ENCODE measurements at regions of chr11 and their contacts with region 1.

Region 1: DNA sequence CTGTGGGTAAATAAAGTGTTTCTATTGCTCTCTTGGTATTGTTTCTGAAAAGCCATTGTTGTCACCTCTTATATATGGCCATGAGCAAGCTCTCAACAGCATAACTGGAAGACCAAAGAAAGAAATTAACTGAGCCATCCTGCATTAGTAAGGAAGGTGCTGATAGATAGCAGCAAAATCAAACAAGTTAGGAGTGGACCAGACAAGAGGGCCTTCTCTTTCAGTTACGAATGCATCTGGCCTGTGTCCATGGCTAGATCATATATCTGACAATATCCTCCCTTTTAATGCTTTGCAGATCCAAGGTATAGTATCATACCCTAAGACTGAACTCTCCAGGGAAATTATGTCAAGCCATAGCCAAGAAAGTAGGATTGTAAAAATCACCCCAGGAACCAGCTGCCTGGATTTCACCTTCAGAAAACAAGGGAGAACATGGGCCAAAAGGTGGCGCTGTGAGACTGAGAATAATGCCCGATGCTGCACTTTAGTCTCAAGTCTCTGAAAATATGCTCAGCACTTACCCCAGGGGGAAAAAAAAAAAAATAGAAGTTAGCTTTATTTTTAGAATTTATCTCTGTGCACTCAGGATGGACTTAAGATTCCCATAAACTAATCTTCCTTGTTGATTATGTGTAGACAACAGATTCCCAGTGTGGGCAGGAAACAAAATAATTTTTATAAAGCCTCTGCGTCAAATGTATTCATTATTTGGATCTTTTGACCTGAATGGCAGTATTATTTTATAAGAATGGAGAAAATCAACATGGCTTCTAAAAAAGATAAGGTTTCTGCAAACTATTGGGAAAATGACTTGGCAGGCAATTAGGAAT is 415.1 kb downstream of the ETS1 start:
- DNase-seq: peak; percentile 91
- H3K4me3 Mint-ChIP-seq: no peak overlapping the region
- H3K27ac Mint-ChIP-seq: peak overlapping the region; percentile 25
- H3K4me1 Mint-ChIP-seq: peaks cover 17% of the 10 kb centered on the region
- H3K27me3 Mint-ChIP-seq: no peaks in the 10 kb centered on the region

Region 2: GRCh38 chr11:128182844-128183243 is 10.6 kb after region 1 on chr11:
- CTCF ChIA-PET with region 1: interaction called, 11 read pairs
- POLR2A ChIA-PET with region 1: no interaction called
- intact Hi-C with region 1: no loop called
- DNase-seq: peak; percentile 32
- H3K4me3 Mint-ChIP-seq: no peak overlapping the region
- H3K27ac Mint-ChIP-seq: no peak overlapping the region
- H3K4me1 Mint-ChIP-seq: peaks cover 9% of the 10 kb centered on the region
- H3K27me3 Mint-ChIP-seq: no peaks in the 10 kb centered on the region

Region 3: DNA sequence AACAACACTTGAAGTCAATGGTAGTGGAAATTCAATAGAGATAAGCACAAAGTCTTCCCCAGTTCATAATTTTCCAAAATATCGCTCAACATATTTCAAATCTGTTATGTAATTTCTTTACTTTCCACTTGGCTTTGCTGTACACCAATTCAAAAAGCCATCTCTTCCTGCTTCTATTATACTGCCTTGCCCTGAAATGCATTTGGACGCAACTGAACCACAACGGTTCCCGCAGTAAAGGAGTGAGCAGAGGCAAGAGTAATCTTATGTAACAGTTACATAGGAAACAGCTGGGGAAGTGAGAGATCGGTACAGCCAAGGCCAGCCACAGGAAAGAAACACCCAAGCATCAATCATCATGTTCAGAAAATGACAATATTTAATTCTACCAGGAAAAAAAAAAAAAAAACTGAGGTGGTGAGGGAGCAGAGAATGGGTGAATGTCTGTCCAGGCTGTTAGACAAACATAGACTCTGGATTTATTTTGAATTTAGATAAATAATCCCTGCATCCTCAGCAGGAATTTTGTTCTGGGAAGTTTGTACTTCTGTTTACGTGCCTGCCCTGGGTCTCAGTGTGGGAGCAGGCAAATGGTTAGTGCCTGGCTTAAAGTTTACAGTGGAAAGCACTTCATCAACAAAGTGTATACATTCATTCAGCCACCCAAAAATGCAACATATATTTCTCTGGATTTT is 22.9 kb after region 1 on chr11:
- CTCF ChIA-PET with region 1: interaction called, 7 read pairs
- POLR2A ChIA-PET with region 1: no interaction called
- intact Hi-C with region 1: loop called (anchors 1 kb)
- DNase-seq: peak; percentile 69
- H3K4me3 Mint-ChIP-seq: no peak overlapping the region
- H3K27ac Mint-ChIP-seq: peak overlapping the region; percentile 2
- H3K4me1 Mint-ChIP-seq: peaks cover 38% of the 10 kb centered on the region
- H3K27me3 Mint-ChIP-seq: no peaks in the 10 kb centered on the region

Region 4: GRCh38 chr11:128506999-128507611 is 334.8 kb after region 1 on chr11:
- CTCF ChIA-PET with region 1: interaction called, 6 read pairs
- POLR2A ChIA-PET with region 1: no interaction called
- intact Hi-C with region 1: loop called (anchors 5 kb)
- DNase-seq: peak; percentile 74
- H3K4me3 Mint-ChIP-seq: peak overlapping the region; percentile 77
- H3K27ac Mint-ChIP-seq: peak overlapping the region; percentile 96
- H3K4me1 Mint-ChIP-seq: peaks cover 90% of the 10 kb centered on the region
- H3K27me3 Mint-ChIP-seq: no peaks in the 10 kb centered on the region

Region 5: GRCh38 chr11:128776424-128777284 is 604.4 kb after region 1 on chr11:
- CTCF ChIA-PET with region 1: interaction called, 15 read pairs
- POLR2A ChIA-PET with region 1: no interaction called
- intact Hi-C with region 1: no loop called
- DNase-seq: peak; percentile 48
- H3K4me3 Mint-ChIP-seq: no peak overlapping the region
- H3K27ac Mint-ChIP-seq: peak overlapping the region; percentile 53
- H3K4me1 Mint-ChIP-seq: peaks cover 41% of the 10 kb centered on the region
- H3K27me3 Mint-ChIP-seq: no peaks in the 10 kb centered on the region

Region 6: DNA sequence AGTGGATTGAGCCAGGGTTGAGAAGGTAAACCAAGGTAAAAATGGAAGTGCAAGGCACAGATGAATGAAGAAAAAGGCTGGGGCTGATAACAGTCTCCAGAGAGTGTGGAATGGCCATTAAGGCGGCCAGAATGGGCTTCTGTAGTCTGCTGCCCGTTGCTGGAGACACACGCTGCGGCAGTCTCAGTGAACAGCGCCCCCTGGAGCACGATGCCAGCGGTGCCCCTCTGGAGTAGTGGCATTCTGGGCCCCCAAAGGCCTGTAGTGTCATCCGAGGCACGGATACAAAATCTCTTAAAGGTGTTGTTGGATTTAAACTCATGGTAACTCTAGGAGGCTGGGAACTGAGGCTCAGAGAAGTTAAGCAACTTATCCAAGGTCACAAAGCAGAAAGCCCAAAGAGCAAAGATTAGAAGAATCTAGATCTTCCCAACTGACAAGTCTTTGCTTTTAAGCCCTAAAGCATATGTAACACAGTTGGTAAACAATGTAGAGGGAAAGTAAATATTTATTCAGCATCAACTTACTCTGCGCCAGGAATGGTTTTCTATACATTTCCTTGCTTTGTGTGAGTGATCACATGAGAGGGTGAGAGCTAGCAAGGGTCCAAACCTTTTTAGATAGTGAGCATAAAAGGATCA is 676.7 kb after region 1 on chr11:
- CTCF ChIA-PET with region 1: interaction called, 6 read pairs
- POLR2A ChIA-PET with region 1: no interaction called
- intact Hi-C with region 1: loop called (anchors 5 kb)
- DNase-seq: peak; percentile 82
- H3K4me3 Mint-ChIP-seq: no peak overlapping the region
- H3K27ac Mint-ChIP-seq: no peak overlapping the region
- H3K4me1 Mint-ChIP-seq: peaks cover 23% of the 10 kb centered on the region
- H3K27me3 Mint-ChIP-seq: no peaks in the 10 kb centered on the region

Region 7: GRCh38 chr11:128859563-128860441 is 687.5 kb after region 1 on chr11:
- CTCF ChIA-PET with region 1: interaction called, 3 read pairs
- POLR2A ChIA-PET with region 1: no interaction called
- intact Hi-C with region 1: loop called (anchors 1 kb)
- DNase-seq: peak; percentile 87
- H3K4me3 Mint-ChIP-seq: no peak overlapping the region
- H3K27ac Mint-ChIP-seq: no peak overlapping the region
- H3K4me1 Mint-ChIP-seq: peaks cover 4% of the 10 kb centered on the region
- H3K27me3 Mint-ChIP-seq: peaks cover 2% of the 10 kb centered on the region

Measured in activated CD4-positive, alpha-beta memory T cell treated with anti-CD3 and anti-CD28 coated beads for 36 hours (primary cell).